CD8-positive, alpha-beta T cell (primary cell): ENCODE measurements at regions of chr17 and their contacts with region 1.

Region 1: GRCh38 chr17:3012926-3013581 is 50.4 kb downstream of the OR1D5 start:
- DNase-seq: peak in 8 of 9 experiments; percentile 28 to 81 (median 60)
- ATAC-seq: peak; percentile 88
- H3K4me3 ChIP-seq: no peak overlapping the region
- H3K4me3 Mint-ChIP-seq: no peak overlapping the region
- H3K27ac ChIP-seq: no peak overlapping the region
- H3K27ac Mint-ChIP-seq: no peak overlapping the region
- H3K4me1 ChIP-seq: no peaks in the 10 kb centered on the region
- H3K4me1 Mint-ChIP-seq: no peaks in the 10 kb centered on the region
- H3K27me3 ChIP-seq: no peaks in the 10 kb centered on the region
- H3K27me3 Mint-ChIP-seq: no peaks in the 10 kb centered on the region
- CTCF ChIP-seq: peak; percentile 71

Region 2: GRCh38 chr17:2770129-2770528 is 242.9 kb before region 1 on chr17:
- CTCF ChIA-PET with region 1: no interaction called
- POLR2A ChIA-PET with region 1: no interaction called
- intact Hi-C with region 1: no loop called
- DNase-seq: no peak
- ATAC-seq: no peak
- H3K4me3 ChIP-seq: no peak overlapping the region
- H3K4me3 Mint-ChIP-seq: no peak overlapping the region
- H3K27ac ChIP-seq: no peak overlapping the region
- H3K27ac Mint-ChIP-seq: no peak overlapping the region
- H3K4me1 ChIP-seq: no peaks in the 10 kb centered on the region
- H3K4me1 Mint-ChIP-seq: no peaks in the 10 kb centered on the region
- H3K27me3 ChIP-seq: peaks cover 0 to 5% of the 10 kb centered on the region in 2 experiments
- H3K27me3 Mint-ChIP-seq: peaks cover 24% of the 10 kb centered on the region
- CTCF ChIP-seq: no peak

Region 3: GRCh38 chr17:2796164-2797125 is 216.6 kb before region 1 on chr17 and contains the start of gene RAP1GAP2:
- CTCF ChIA-PET with region 1: no interaction called
- POLR2A ChIA-PET with region 1: no interaction called
- intact Hi-C with region 1: no loop called
- DNase-seq: peak; percentile 44 to 92 (median 78)
- ATAC-seq: peak; percentile 81
- H3K4me3 ChIP-seq: peak within 1 kb of the TSS; percentile 56 to 82
- H3K4me3 Mint-ChIP-seq: peak within 1 kb of the TSS; percentile 86
- H3K27ac ChIP-seq: peak within 1 kb of the TSS; percentile 6 to 30
- H3K27ac Mint-ChIP-seq: peak within 1 kb of the TSS; percentile 78
- H3K4me1 ChIP-seq: peaks cover 74% of the 10 kb centered on the region
- H3K4me1 Mint-ChIP-seq: peaks cover 73% of the 10 kb centered on the region
- H3K27me3 ChIP-seq: no peaks in the 10 kb centered on the region
- H3K27me3 Mint-ChIP-seq: peaks cover 5% of the 10 kb centered on the region
- CTCF ChIP-seq: no peak
- total RNA-seq, gene RAP1GAP2: 18.9 to 19.9 TPM

Region 4: DNA sequence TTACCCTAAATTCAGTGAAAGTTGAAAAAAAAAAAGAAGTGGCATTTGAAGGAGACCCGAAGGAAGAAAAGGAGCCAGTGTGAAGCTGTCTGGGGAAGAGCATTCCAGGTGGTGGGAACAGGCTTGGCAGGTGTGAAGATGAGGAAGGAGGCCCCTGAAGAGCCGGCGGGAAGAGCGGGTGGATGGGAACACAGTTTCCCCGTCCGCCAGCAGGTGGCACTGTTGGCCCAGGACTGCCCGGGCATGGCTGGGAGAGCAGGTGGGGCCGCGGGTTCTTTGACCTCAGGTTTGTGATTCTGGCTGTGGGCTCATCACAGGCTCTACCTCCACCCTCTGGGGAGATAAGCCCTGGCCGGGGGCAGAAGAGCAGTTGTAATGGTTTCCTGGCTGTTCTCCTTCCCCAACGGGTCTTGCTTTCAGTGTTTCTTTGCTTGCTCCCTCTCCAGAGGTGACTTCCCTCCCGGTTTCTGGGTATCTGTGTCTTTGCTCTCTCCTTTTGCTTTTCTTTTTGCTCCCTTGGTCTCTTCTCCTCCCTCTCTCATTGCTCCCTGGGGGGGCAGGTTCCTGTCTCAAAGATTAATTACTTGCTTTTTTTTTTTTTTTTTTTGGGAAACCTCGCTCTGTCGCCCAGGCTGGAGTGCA is 184.5 kb before region 1 on chr17:
- CTCF ChIA-PET with region 1: interaction called, 11 read pairs
- POLR2A ChIA-PET with region 1: no interaction called
- intact Hi-C with region 1: loop called (anchors 1 kb)
- DNase-seq: peak; percentile 52 to 87 (median 79)
- ATAC-seq: peak; percentile 87
- H3K4me3 ChIP-seq: peak overlapping the region in 1 of 2 experiments; percentile 37
- H3K4me3 Mint-ChIP-seq: peak overlapping the region; percentile 22
- H3K27ac ChIP-seq: no peak overlapping the region
- H3K27ac Mint-ChIP-seq: no peak overlapping the region
- H3K4me1 ChIP-seq: peaks cover 9% of the 10 kb centered on the region
- H3K4me1 Mint-ChIP-seq: peaks cover 25% of the 10 kb centered on the region
- H3K27me3 ChIP-seq: no peaks in the 10 kb centered on the region
- H3K27me3 Mint-ChIP-seq: peaks cover 19% of the 10 kb centered on the region
- CTCF ChIP-seq: peak; percentile 95

Region 5: DNA sequence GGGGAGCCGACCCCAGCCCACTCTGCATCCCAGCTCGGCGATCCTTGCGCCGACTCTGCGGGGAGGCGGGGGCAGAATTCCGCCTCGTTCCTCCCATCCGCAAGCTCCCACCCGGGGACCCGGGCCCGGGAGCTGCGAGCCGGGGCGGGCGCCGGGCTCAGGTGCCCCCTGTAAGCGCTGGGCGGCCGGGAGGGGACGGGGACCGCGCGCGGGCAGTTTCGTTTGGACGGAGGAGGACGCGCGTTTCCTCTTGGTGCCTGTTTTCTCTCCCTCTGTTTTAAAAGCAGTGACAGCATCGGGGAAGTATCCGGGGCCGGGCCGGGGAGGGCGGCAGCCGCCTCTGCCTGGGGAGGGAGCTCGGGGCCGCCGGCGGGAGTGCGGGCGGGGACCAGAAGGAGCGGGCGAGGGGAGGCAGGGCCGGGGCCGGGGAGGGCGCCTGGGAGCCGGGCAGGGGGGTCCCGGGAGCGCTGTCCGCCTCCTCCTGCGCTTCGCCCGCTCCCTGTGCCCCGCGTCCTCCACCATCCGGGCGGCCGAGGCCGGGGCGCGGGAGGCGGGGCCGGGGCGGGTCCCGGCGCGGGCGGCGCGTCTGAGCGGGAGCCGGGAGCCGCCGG is 159.8 kb before region 1 on chr17:
- CTCF ChIA-PET with region 1: interaction called, 167 read pairs
- POLR2A ChIA-PET with region 1: interaction called, 3 read pairs
- intact Hi-C with region 1: loop called in 1 of 2 experiments (anchors 1 kb)
- DNase-seq: peak in 7 of 9 experiments; percentile 9 to 58 (median 37)
- ATAC-seq: peak; percentile 35
- H3K4me3 ChIP-seq: peak overlapping the region; percentile 18 to 27
- H3K4me3 Mint-ChIP-seq: peak overlapping the region; percentile 61
- H3K27ac ChIP-seq: no peak overlapping the region
- H3K27ac Mint-ChIP-seq: no peak overlapping the region
- H3K4me1 ChIP-seq: peaks cover 12% of the 10 kb centered on the region
- H3K4me1 Mint-ChIP-seq: peaks cover 20% of the 10 kb centered on the region
- H3K27me3 ChIP-seq: peaks cover 4 to 12% of the 10 kb centered on the region in 2 experiments
- H3K27me3 Mint-ChIP-seq: peaks cover 43% of the 10 kb centered on the region
- CTCF ChIP-seq: no peak